Sciatic nerve (tissue), 2 donors: ENCODE measurements at regions of chr14 and their contacts with region 1.

Region 1: DNA sequence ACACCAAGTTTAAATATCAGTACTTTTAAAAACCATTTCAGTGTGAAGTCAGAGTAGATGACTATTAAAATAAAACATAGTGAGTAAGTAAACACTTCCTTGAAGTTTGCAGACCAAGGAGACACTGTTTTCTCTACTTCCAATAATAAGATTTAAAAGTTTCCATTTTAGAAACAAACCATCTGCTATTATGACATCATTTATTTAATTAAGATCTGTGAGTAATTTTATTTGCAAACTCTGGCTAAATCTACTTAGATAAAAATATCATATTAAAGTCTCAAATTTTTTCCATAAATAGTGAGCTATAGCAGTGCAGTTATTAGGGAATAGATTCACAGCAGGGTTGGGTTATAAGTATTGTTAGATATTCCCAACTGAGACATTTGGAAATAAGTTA is 1267.0 kb upstream of the FLRT2 start:
- DNase-seq: no peak
- ATAC-seq: no peak

Region 2: GRCh38 chr14:84250893-84251292 is 12.0 kb before region 1 on chr14:
- intact Hi-C with region 1: loop called (anchors 1 kb)
- DNase-seq: no peak
- ATAC-seq: no peak